ENCODE measurements at regions of chr9 and their contacts with region 1.

Region 1: DNA sequence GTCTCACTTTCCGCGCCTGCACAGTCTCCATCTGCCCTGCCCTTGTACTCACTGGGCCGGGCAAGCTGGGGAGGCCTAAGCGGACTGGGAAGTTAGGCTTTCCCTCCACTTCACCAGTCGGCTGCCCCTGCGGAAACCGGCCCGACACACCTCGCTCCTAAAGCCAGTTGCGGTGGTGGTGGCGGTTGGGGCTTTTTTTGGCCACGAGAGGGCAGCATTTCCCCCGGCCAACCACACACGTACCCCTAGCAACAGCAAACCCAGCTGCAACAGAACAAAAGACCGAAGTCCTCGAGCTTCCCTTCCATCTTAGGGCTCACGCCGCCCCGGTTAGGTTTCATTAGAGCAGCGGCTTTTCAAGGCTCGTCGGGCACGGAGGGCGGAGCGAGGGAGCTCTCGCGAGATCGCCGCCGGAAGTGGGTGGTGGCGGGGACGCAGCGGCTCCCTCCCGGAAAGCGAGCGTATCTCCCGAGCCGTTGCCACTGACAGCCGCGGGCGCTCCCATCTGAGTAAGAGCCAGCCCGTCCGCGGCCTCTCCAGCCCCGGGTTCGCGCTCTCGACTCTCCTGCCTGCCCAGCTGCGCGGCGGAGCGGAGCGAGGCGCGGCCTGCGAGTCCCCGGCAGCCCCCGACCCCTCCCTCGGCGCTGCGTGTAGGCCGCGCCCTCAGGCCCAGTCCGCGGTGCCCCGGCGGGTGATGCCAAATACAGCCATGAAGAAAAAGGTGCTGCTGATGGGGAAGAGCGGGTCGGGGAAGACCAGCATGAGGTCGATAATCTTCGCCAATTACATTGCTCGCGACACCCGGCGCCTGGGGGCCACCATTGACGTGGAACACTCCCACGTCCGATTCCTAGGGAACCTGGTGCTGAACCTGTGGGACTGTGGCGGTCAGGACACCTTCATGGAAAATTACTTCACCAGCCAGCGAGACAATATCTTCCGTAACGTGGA is at the start of gene RRAGA:
- DNase-seq: peak; percentile 73
- H3K4me3 ChIP-seq: peak within 1 kb of the TSS; percentile 53
- H3K27me3 ChIP-seq: no peaks in the 10 kb centered on the region
- CTCF ChIP-seq: peak; percentile 81
- polyA plus RNA-seq, gene RRAGA: 161 and 167 TPM in 2 replicates

Region 2: DNA sequence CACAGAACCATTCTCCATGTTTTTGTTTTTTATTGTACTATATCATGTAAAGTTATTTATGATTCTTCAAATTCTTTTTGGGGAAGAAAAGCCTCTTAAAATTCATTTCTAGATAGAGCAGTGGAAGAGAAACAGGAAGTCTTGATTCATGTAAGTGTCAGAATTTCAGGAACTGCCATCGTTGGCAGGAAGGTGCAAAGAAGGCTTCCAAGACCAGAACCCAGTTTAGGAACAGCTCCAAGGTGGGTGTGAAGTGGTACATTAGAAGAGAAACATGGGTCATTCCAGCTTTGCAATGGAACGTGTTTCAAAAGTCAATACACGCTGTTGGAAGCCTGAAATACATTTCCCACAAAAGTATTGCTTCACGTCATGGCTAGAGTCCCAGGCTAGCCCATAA is 31.0 kb before region 1 on chr9:
- CTCF ChIA-PET with region 1: no interaction called
- POLR2A ChIA-PET with region 1: no interaction called
- DNase-seq: no peak
- H3K4me3 ChIP-seq: no peak overlapping the region
- H3K27me3 ChIP-seq: no peaks in the 10 kb centered on the region
- CTCF ChIP-seq: no peak

Region 3: DNA sequence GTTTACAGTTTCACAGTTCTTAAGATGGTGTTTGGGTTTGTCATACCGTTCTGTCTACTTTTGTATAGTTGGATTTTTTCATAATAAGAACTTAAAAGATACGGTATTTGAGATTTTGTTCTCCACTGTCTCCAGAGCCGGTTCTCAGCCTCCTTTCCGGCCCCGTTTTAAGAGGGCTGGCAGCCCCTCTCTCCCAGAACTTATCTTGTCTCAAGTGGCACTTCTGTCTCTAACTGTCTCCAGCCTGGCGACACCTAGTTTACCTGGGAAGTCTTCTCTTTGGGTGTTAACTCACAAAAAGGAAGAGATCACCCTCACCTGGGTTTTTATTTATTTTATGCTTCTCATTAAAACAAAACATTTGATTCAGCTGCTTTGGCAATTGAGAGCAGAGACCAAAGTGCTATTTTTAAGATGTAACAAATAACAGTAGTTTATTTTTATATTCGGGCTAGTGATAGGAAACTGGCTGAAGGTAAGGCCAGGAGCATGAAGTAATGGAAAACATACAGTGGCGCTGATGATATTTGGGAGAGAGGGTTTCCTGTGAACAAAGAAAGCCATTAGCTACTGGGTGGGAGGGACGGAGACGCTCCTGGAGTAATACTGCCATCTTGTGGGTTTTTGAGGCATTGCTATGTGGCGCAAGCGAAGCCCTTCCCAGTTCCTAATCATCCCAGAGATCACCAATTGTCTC is 407.9 kb after region 1 on chr9:
- CTCF ChIA-PET with region 1: interaction called, 12 read pairs
- POLR2A ChIA-PET with region 1: no interaction called
- DNase-seq: no peak
- H3K4me3 ChIP-seq: no peak overlapping the region
- H3K27me3 ChIP-seq: no peaks in the 10 kb centered on the region
- CTCF ChIP-seq: peak; percentile 91

Measured in BJ (cell line).